Calu3 (cell line): ENCODE measurements at regions of chr3 and their contacts with region 1.

Region 1: GRCh38 chr3:171187706-171188290 is 161.3 kb upstream of the SLC2A2 start:
- DNase-seq: peak; percentile 54
- H3K4me3 Mint-ChIP-seq: no peak overlapping the region
- H3K27ac Mint-ChIP-seq: no peak overlapping the region
- H3K4me1 Mint-ChIP-seq: peaks cover 46% of the 10 kb centered on the region
- H3K27me3 Mint-ChIP-seq: no peaks in the 10 kb centered on the region
- CTCF ChIP-seq: peak; percentile 91

Region 2: DNA sequence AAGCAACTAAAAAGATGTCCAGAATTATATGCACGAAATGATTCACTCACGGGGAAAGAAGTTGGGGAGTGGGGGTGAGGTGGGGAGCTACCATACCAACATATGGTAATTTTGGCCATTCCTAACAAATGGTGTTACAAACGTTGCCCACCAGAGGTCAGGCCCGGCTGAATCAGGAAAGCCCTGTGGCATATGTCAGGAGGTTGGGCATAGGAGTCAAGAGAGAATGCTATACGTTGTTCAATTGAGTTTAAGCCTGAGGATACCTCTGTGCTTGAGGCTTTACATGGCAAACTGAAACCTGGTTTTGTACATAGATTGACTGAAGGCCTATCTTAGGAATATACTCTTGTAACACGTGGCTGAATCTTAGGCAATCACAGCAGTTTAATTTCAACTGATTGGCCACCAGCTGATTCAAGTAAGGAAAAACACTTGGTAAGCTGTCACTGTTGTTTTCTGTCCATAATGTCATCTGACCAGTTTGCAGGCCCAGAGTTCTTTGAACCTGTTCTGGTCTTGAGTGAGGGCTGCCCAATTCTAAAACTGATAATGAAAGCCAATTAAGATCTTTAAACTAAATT is 137.8 kb before region 1 on chr3:
- CTCF ChIA-PET with region 1: interaction called, 8 read pairs
- intact Hi-C with region 1: loop called (anchors 1 kb)
- DNase-seq: peak; percentile 80
- H3K4me3 Mint-ChIP-seq: no peak overlapping the region
- H3K27ac Mint-ChIP-seq: peak overlapping the region; percentile 11
- H3K4me1 Mint-ChIP-seq: peaks cover 28% of the 10 kb centered on the region
- H3K27me3 Mint-ChIP-seq: no peaks in the 10 kb centered on the region
- CTCF ChIP-seq: peak; percentile 90

Region 3: DNA sequence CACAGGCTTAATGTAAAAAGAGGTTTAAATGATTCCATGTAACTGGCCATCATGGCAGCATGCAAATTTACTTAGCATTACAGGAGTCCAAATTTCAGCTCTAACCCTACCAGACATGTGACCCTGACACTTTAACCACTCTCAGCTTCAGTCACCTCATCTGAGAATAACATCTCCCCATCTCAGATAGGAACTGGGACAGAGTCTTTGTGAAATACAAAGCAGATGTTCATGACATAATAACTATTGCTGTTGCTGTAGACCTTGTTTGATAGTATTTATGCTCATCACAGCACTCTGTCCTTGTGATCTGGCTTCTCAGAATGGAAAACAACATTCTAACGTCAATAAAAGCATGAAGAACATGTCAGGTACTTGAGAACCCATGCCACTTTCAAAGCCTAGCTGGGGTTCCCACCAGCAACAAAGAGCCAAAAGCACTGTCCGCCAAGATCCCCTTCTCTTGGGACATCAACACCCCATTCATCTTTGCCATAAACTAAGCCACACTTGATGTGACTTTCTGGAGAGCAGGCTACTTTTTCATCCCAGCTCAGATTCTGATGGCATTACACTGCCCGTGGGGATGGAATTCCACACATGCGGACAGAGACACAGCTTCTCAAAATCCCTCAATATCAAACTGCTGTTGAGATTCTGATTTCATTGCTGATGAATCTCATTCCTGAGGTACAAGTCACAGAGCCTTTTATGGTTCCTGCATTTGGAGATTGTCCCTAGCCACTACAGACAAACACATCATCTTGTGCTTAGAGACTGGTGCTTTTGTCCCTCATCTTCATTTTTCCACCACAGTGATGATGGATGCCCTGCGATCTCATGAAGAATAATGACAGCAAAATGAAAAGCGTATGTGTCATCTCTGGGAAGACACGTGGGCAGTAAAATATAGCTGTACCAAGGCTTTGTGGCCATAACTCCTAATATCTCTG is 69.7 kb after region 1 on chr3:
- CTCF ChIA-PET with region 1: interaction called, 3 read pairs
- intact Hi-C with region 1: loop called (anchors 2 kb)
- DNase-seq: no peak
- H3K4me3 Mint-ChIP-seq: no peak overlapping the region
- H3K27ac Mint-ChIP-seq: no peak overlapping the region
- H3K4me1 Mint-ChIP-seq: peaks cover 85% of the 10 kb centered on the region
- H3K27me3 Mint-ChIP-seq: no peaks in the 10 kb centered on the region
- CTCF ChIP-seq: no peak

Region 4: DNA sequence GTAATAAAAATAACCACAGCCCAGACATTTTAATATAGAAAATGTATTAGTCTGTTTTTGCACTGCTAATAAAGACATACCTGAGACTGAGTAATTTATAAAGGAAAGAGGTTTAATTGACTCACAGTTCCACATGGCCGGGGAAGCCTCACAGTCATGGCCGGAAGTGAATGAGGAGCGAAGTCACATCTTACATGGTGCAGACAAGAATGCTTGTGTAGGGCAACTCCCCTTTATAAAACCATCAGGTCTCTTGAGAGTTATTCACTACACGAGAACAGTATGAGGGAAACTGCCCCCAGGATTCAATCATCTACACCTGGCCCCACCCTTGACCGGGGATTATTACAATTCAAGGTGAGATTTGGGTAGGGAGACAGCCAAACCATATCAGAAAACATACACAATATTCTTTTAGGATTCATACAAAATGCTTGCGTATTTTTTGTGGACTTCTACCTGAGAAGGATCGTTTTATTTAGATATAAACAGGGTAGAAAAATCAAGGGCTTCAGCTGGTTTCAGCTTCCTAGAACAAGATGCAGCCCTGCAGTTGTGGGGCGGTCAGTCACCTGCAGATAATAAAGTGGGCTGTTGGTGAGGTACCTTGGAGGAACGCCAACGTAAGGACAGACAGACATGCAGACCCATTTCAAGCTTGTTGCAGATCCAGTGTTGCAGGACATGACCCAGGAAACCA is 170.5 kb after region 1 on chr3:
- CTCF ChIA-PET with region 1: no interaction called
- intact Hi-C with region 1: loop called (anchors 5 kb)
- DNase-seq: no peak
- H3K4me3 Mint-ChIP-seq: no peak overlapping the region
- H3K27ac Mint-ChIP-seq: peak overlapping the region; percentile 78
- H3K4me1 Mint-ChIP-seq: peaks cover 73% of the 10 kb centered on the region
- H3K27me3 Mint-ChIP-seq: no peaks in the 10 kb centered on the region
- CTCF ChIP-seq: no peak

Region 5: GRCh38 chr3:171566803-171567422 is 379.1 kb after region 1 on chr3:
- CTCF ChIA-PET with region 1: interaction called, 6 read pairs
- intact Hi-C with region 1: loop called (anchors 1 kb)
- DNase-seq: peak; percentile 21
- H3K4me3 Mint-ChIP-seq: no peak overlapping the region
- H3K27ac Mint-ChIP-seq: no peak overlapping the region
- H3K4me1 Mint-ChIP-seq: no peaks in the 10 kb centered on the region
- H3K27me3 Mint-ChIP-seq: no peaks in the 10 kb centered on the region
- CTCF ChIP-seq: peak; percentile 87